Posterior vena cava (tissue), 2 donors: ENCODE measurements at regions of chr2 and their contacts with region 1.

Region 1: GRCh38 chr2:73269686-73270465 is 14.4 kb downstream of the FBXO41 start:
- DNase-seq: no peak

Region 2: GRCh38 chr2:71631411-71631931 is 1638.4 kb before region 1 on chr2:
- intact Hi-C with region 1: loop called in 1 of 2 experiments (anchors 5 kb)
- DNase-seq: no peak

Region 3: GRCh38 chr2:73239776-73240175 is 30.1 kb before region 1 on chr2:
- intact Hi-C with region 1: loop called in 1 of 2 experiments (anchors 1 kb)
- DNase-seq: no peak